GM10248 (cell line): ENCODE measurements at regions of chr7 and their contacts with region 1.

Region 1: GRCh38 chr7:142345811-142346210 is 88.0 kb upstream of the PRSS58 start:
- DNase-seq: no peak
- CTCF ChIP-seq: no peak

Region 2: DNA sequence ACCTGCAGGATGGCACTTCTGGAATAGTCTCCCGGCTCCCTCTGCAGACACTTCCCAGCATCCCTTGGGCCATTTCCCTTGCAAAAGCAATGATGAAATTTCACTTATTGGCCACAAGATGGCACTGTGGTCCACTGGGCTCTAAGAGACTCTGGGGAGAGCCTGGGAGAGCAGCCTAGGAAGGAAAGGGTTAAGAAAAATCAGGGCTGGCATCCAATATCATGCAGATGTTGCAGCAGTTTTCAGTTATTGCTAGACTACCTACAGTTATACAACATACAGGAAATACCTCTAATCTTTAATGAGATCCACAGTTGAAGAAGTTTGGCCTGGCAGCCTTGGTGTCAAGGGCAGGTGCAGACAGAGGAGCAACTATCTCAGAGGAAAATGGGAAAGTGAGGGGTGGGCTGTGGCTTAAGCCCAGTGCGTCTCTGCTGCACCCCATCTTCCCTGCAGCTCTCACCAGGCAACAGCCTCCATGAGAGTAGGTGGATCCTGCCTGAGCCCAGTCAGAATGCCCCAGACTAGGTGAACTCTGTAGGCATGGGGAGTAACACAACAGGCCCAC is 12.2 kb after region 1 on chr7:
- CTCF ChIA-PET with region 1: interaction called, 23 read pairs
- POLR2A ChIA-PET with region 1: no interaction called
- DNase-seq: peak; percentile 59
- CTCF ChIP-seq: peak; percentile 84

Region 3: DNA sequence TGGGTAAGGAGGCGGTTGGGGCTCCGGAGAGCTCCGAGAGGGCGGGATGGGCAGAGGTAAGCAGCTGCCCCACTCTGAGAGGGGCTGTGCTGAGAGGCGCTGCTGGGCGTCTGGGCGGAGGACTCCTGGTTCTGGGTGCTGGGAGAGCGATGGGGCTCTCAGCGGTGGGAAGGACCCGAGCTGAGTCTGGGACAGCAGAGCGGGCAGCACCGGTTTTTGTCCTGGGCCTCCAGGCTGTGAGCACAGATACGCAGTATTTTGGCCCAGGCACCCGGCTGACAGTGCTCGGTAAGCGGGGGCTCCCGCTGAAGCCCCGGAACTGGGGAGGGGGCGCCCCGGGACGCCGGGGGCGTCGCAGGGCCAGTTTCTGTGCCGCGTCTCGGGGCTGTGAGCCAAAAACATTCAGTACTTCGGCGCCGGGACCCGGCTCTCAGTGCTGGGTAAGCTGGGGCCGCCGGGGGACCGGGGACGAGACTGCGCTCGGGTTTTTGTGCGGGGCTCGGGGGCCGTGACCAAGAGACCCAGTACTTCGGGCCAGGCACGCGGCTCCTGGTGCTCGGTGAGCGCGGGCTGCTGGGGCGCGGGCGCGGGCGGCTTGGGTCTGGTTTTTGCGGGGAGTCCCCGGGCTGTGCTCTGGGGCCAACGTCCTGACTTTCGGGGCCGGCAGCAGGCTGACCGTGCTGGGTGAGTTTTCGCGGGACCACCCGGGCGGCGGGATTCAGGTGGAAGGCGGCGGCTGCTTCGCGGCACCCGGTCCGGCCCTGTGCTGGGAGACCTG is 451.0 kb after region 1 on chr7:
- CTCF ChIA-PET with region 1: no interaction called
- POLR2A ChIA-PET with region 1: no interaction called
- DNase-seq: peak; percentile 43
- CTCF ChIP-seq: no peak